ENCODE measurements at regions of chr11 and their contacts with region 1.

Region 1: GRCh38 chr11:9280655-9281301 is 15.6 kb upstream of the DENND5A start:
- H3K4me3 Mint-ChIP-seq: no peak overlapping the region
- H3K27ac Mint-ChIP-seq: no peak overlapping the region
- H3K4me1 Mint-ChIP-seq: no peaks in the 10 kb centered on the region
- H3K27me3 Mint-ChIP-seq: no peaks in the 10 kb centered on the region

Region 2: GRCh38 chr11:9160166-9160565 is 120.6 kb before region 1 on chr11:
- intact Hi-C with region 1: loop called (anchors 10 kb)
- H3K4me3 Mint-ChIP-seq: no peak overlapping the region
- H3K27ac Mint-ChIP-seq: peak overlapping the region; percentile 47
- H3K4me1 Mint-ChIP-seq: peaks cover 16% of the 10 kb centered on the region
- H3K27me3 Mint-ChIP-seq: no peaks in the 10 kb centered on the region

Region 3: DNA sequence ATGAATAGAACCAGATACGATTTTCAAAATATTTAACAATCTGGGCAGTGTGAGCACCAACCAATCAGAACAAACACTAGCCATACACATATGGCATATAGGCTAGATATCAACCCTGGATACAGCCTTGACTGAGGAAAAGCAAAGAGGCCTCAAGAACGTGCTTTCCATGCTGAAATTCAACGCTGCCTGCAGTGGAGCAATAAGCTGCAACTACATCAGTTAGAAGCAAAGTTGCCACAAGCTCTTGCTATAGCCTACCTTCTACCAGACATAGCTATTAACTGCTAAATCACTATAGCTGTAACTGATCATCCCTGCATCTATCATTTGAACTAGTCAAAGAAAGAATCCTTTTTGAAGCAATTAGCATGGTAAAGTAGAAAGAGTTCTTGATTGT is 58.1 kb before region 1 on chr11:
- intact Hi-C with region 1: loop called (anchors 10 kb)
- H3K4me3 Mint-ChIP-seq: no peak overlapping the region
- H3K27ac Mint-ChIP-seq: no peak overlapping the region
- H3K4me1 Mint-ChIP-seq: peaks cover 53% of the 10 kb centered on the region
- H3K27me3 Mint-ChIP-seq: no peaks in the 10 kb centered on the region

Region 4: DNA sequence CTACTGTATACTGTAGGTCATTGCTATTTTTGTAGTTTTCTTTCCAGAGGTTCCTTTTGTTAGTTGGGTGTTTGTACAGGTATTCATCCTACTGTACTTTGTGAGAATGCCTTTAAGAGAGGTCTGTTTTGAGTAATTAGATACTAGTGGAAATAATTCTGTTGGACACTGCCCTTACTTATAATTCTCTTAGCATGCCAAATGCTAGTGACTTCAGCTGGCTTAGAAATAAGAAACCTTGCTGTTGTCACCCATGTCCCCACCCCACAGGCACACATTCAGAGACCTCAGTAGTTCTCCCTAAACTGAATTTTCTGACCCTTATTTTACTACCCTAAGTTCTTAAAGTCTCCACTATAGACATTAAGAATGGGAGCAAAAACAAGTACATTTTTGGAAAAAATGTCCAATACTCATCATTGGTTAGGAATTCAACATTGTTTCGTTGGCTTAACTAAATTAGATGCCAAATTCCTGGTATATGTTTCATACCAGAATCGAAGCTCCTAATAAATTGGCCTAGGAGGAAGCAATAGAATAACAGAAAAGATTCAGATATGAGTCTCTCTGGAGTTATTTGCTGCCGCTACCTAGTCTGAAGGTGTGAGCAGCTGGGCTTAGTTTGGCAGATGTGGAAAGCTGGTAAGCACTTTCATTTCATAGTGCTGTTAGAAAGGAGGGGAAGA is 208.4 kb after region 1 on chr11:
- intact Hi-C with region 1: loop called (anchors 10 kb)
- H3K4me3 Mint-ChIP-seq: no peak overlapping the region
- H3K27ac Mint-ChIP-seq: no peak overlapping the region
- H3K4me1 Mint-ChIP-seq: no peaks in the 10 kb centered on the region
- H3K27me3 Mint-ChIP-seq: no peaks in the 10 kb centered on the region

Measured in dendritic cell treated with granulocyte-macrophage colony-stimulating factor and Interleukin-4, amounts not matched to agents 40 ng/mL and 50 ng/mL, for 4 days (primary cell).